B cell (primary cell): ENCODE measurements at regions of chr15 and their contacts with region 1.

Region 1: GRCh38 chr15:81336568-81336967 is 12.6 kb upstream of the STARD5 start:
- DNase-seq: peak; percentile 65
- ATAC-seq: peak; percentile 57
- H3K4me3 ChIP-seq: no peak overlapping the region
- H3K4me3 Mint-ChIP-seq: no peak overlapping the region
- H3K27ac ChIP-seq: no peak overlapping the region
- H3K27ac Mint-ChIP-seq: no peak overlapping the region
- H3K4me1 ChIP-seq: no peaks in the 10 kb centered on the region
- H3K4me1 Mint-ChIP-seq: peaks cover 7% of the 10 kb centered on the region
- H3K27me3 ChIP-seq: no peaks in the 10 kb centered on the region
- H3K27me3 Mint-ChIP-seq: no peaks in the 10 kb centered on the region
- CTCF ChIP-seq: peak; percentile 51

Region 2: DNA sequence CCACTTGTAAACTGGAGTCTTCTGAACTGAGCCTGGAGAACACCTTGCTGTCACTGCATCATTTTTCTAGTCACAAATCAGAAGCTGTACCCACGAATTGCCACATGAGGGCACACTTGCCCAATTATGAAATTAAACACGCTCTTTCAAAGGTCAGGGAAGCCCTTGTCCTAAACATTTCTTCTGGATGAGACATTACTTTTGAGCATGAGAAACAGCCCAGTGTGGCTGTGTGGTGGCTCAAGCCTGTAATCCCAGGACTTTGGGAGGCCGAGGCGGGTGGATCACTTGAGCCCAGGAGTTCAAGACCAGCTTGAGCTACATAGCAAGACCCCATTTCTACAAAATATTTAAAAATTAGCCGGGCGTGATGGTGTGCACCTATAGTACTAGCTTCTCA is 230.0 kb before region 1 on chr15:
- CTCF ChIA-PET with region 1: no interaction called
- POLR2A ChIA-PET with region 1: no interaction called
- intact Hi-C with region 1: loop called (anchors 1 kb)
- DNase-seq: peak; percentile 59
- ATAC-seq: peak; percentile 53
- H3K4me3 ChIP-seq: no peak overlapping the region
- H3K4me3 Mint-ChIP-seq: no peak overlapping the region
- H3K27ac ChIP-seq: no peak overlapping the region
- H3K27ac Mint-ChIP-seq: no peak overlapping the region
- H3K4me1 ChIP-seq: no peaks in the 10 kb centered on the region
- H3K4me1 Mint-ChIP-seq: peaks cover 6% of the 10 kb centered on the region
- H3K27me3 ChIP-seq: peaks cover 0 to 12% (median 4%) of the 10 kb centered on the region in 4 experiments
- H3K27me3 Mint-ChIP-seq: peaks cover 42% of the 10 kb centered on the region
- CTCF ChIP-seq: peak; percentile 79

Region 3: DNA sequence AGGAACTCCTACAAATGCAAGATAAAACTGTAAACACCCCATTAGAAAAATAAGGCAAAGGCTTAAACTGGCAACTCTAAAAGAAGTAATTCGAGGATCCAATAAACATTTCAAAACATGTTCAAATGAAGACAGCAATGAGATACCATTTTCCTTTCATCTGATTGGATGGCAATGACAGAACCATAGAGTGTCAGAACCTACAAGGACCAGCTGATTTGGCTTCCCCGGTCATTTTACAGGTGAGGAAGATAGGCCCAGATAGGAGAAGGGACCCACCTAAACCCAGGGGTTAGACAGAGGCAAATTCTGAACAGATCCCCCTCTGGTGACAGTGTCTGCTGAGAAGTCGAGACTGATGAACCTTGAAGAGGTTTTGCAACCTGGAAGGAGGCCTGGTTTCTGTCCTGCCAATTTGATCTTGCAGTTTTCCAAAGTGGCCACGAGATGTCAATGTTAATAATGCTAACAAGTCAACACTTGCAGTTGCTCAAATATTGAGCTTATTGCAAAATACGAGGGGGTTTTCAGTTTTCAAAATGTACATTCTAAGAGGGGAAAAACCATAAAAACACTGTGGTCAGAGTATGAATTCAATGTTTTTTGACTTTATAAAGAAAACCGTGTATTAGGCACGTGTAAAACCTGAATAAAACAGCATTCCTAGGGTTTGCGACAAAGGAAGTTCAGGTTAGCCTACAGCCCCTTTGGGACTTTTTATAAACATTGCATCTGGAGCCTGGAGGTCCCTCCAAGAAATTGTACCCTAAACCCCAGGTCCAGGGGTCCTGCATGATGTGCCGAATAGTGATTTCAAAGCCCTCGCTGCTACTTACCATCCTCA is 181.0 kb before region 1 on chr15:
- CTCF ChIA-PET with region 1: interaction called, 7 read pairs
- POLR2A ChIA-PET with region 1: no interaction called
- intact Hi-C with region 1: loop called (anchors 2 kb)
- DNase-seq: peak; percentile 43
- ATAC-seq: no peak
- H3K4me3 ChIP-seq: no peak overlapping the region
- H3K4me3 Mint-ChIP-seq: no peak overlapping the region
- H3K27ac ChIP-seq: no peak overlapping the region
- H3K27ac Mint-ChIP-seq: no peak overlapping the region
- H3K4me1 ChIP-seq: no peaks in the 10 kb centered on the region
- H3K4me1 Mint-ChIP-seq: no peaks in the 10 kb centered on the region
- H3K27me3 ChIP-seq: no peaks in the 10 kb centered on the region
- H3K27me3 Mint-ChIP-seq: peaks cover 6% of the 10 kb centered on the region
- CTCF ChIP-seq: peak; percentile 48

Region 4: GRCh38 chr15:81286621-81287121 is 49.9 kb before region 1 on chr15:
- CTCF ChIA-PET with region 1: interaction called, 35 read pairs
- POLR2A ChIA-PET with region 1: no interaction called
- intact Hi-C with region 1: no loop called
- DNase-seq: peak; percentile 77
- ATAC-seq: peak; percentile 80
- H3K4me3 ChIP-seq: peak overlapping the region in 3 of 5 experiments; percentile 13 to 28 (median 21)
- H3K4me3 Mint-ChIP-seq: peak overlapping the region; percentile 65
- H3K27ac ChIP-seq: peak overlapping the region; percentile 92 to 98
- H3K27ac Mint-ChIP-seq: peak overlapping the region; percentile 96
- H3K4me1 ChIP-seq: peaks cover 65 to 81% of the 10 kb centered on the region in 2 donors
- H3K4me1 Mint-ChIP-seq: peaks cover 74% of the 10 kb centered on the region
- H3K27me3 ChIP-seq: no peaks in the 10 kb centered on the region
- H3K27me3 Mint-ChIP-seq: no peaks in the 10 kb centered on the region
- CTCF ChIP-seq: no peak

Region 5: DNA sequence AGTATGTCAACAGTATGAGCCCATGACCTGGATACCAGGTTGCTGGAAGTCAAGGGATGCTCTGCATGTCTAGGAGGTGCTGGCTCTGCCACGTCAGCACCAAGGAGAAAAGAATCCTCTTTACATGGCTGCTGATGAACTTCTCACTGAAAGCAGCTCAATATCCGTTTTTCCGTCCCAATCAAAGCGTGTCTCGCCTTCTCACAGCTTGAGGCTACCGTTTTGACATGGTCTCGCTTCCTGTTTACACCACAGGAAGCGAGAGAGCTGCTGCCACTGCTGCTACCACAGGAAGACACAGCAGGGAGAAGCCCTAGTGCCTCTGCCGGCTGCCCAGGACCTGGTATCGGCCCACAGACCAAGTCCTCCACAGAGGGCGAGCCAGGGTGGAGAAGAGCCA is 39.9 kb before region 1 on chr15:
- CTCF ChIA-PET with region 1: interaction called, 22 read pairs
- POLR2A ChIA-PET with region 1: no interaction called
- intact Hi-C with region 1: no loop called
- DNase-seq: peak; percentile 89
- ATAC-seq: peak; percentile 39
- H3K4me3 ChIP-seq: peak overlapping the region; percentile 79 to 100 (median 87)
- H3K4me3 Mint-ChIP-seq: peak overlapping the region; percentile 100
- H3K27ac ChIP-seq: peak overlapping the region; percentile 95 to 98
- H3K27ac Mint-ChIP-seq: peak overlapping the region; percentile 98
- H3K4me1 ChIP-seq: peaks cover 54 to 86% of the 10 kb centered on the region in 2 donors
- H3K4me1 Mint-ChIP-seq: peaks cover 92% of the 10 kb centered on the region
- H3K27me3 ChIP-seq: no peaks in the 10 kb centered on the region
- H3K27me3 Mint-ChIP-seq: no peaks in the 10 kb centered on the region
- CTCF ChIP-seq: no peak

Region 6: DNA sequence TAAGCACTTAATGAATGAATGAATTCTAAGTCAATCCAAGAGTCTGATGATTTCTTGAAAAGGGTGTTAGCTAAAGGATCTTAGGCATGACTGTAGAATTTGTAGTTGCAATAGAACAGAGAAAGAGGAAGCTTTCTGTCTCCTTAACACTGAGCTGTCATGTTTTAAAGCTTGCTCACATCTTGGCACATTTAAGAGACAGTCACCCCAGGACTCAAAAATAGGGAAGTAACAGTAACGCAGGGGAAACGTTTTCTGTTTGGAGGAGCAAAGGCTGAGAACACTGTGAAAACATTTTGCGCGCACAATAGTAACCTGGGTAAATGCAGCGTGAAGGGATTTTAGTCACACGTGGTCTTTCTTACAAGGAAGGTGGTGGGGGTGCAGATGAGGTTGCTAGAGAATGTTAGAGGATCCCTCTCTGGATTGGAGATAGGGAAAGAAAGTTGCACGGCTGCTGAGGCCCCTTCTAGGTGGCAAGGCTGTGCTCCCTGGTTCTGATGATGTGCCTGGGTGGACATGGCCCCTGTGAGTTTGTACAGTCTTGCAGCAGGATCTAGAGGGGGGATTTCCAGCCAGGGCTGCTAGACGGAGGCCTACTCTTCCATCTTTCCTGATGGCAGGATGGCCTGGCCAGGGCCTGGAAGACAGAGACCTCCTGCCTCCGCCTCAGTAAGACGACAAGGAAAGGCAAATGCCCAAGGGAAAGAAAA is 24.7 kb before region 1 on chr15:
- CTCF ChIA-PET with region 1: interaction called, 12 read pairs
- POLR2A ChIA-PET with region 1: no interaction called
- intact Hi-C with region 1: no loop called
- DNase-seq: peak; percentile 85
- ATAC-seq: peak; percentile 86
- H3K4me3 ChIP-seq: peak overlapping the region in 3 of 5 experiments; percentile 23 to 27 (median 25)
- H3K4me3 Mint-ChIP-seq: peak overlapping the region; percentile 65
- H3K27ac ChIP-seq: peak overlapping the region; percentile 66 to 88
- H3K27ac Mint-ChIP-seq: peak overlapping the region; percentile 87
- H3K4me1 ChIP-seq: peaks cover 62 to 67% of the 10 kb centered on the region in 2 donors
- H3K4me1 Mint-ChIP-seq: peaks cover 80% of the 10 kb centered on the region
- H3K27me3 ChIP-seq: no peaks in the 10 kb centered on the region
- H3K27me3 Mint-ChIP-seq: no peaks in the 10 kb centered on the region
- CTCF ChIP-seq: no peak

Region 7: GRCh38 chr15:81363718-81364500 is 27.3 kb after region 1 on chr15:
- CTCF ChIA-PET with region 1: no interaction called
- POLR2A ChIA-PET with region 1: no interaction called
- intact Hi-C with region 1: no loop called
- DNase-seq: no peak
- ATAC-seq: no peak
- H3K4me3 ChIP-seq: no peak overlapping the region
- H3K4me3 Mint-ChIP-seq: no peak overlapping the region
- H3K27ac ChIP-seq: no peak overlapping the region
- H3K27ac Mint-ChIP-seq: no peak overlapping the region
- H3K4me1 ChIP-seq: no peaks in the 10 kb centered on the region
- H3K4me1 Mint-ChIP-seq: no peaks in the 10 kb centered on the region
- H3K27me3 ChIP-seq: no peaks in the 10 kb centered on the region
- H3K27me3 Mint-ChIP-seq: peaks cover 5% of the 10 kb centered on the region
- CTCF ChIP-seq: no peak

Region 8: DNA sequence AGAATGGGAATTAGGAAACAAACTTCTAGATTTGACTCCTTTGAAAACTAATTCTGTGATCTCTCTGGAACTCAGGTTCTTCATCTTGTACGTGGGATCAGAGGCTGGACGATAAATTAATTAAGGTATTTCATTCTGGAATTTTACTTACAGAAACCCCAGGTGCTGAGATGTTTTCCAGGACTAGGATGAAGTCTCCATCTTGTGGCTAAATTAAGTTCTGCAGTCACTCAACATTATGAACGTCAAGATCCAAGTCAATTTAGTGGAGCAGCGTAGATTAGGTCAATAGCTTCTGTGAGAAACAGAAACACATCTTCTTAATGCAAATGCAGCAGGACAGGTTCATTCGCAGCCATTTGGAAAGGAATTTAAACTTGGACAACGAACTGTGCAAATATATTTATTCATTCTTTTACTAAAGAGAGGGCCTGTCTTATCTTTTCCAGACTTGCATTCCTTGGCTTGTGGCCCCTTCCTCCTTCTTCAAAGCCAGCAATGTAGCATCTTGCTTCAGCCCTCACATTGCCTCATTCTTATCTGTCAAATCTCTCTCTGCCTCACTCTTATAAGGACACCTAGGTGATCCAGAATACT is 64.2 kb after region 1 on chr15:
- CTCF ChIA-PET with region 1: interaction called, 23 read pairs
- POLR2A ChIA-PET with region 1: no interaction called
- intact Hi-C with region 1: no loop called
- DNase-seq: peak; percentile 70
- ATAC-seq: no peak
- H3K4me3 ChIP-seq: no peak overlapping the region
- H3K4me3 Mint-ChIP-seq: no peak overlapping the region
- H3K27ac ChIP-seq: no peak overlapping the region
- H3K27ac Mint-ChIP-seq: no peak overlapping the region
- H3K4me1 ChIP-seq: no peaks in the 10 kb centered on the region
- H3K4me1 Mint-ChIP-seq: no peaks in the 10 kb centered on the region
- H3K27me3 ChIP-seq: no peaks in the 10 kb centered on the region
- H3K27me3 Mint-ChIP-seq: peaks cover 10% of the 10 kb centered on the region
- CTCF ChIP-seq: peak; percentile 84